Panc1 (cell line): ENCODE measurements at regions of chr15 and their contacts with region 1.

Region 1: DNA sequence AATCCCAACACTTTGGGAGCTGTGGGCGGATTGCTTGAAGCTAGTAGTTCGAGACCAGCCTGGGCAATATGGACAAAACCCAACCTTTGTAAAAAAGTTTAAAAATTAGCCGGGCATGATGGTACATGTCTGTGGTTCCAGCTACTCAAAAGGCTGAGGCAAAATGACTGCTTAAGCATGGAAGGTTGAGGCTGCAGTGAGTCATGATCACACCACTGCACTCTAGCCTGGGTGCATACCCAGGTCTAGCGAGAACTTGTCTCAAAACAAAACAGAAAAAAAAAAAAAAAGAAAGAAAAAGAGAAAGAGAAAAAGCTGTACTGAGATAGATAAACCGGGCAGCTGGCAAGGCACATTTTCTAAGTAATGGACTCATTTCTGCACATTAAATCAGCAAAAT is 10.6 kb downstream of the ARPP19 start:
- DNase-seq: no peak
- ATAC-seq: peak; percentile 71; the same call in 1 of the 2 replicates
- H3K4me3 ChIP-seq: no peak overlapping the region
- H3K27ac ChIP-seq: no peak overlapping the region
- H3K4me1 ChIP-seq: peaks cover 10% of the 10 kb centered on the region; the same call in 1 of the 2 replicates
- H3K27me3 ChIP-seq: no peaks in the 10 kb centered on the region
- CTCF ChIP-seq: no peak

Region 2: DNA sequence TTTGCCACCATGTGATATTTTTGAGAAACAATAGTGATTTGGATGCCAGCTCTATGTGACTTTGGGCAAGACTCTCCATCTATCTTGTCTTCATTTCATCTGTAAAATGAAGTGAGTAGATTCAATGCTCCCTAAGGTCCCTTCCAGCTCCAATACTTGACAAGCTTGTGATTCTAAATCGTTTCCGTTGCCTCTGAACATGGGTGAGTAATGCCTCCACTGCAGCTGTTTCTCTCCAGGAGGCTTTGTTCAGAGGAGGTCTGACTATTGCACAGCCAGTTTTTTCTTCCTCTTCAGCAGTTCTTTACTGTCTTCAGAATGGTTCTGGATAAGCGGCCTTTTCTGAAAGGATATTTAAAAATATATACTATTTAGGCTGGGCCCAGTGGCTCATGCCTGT is 743.6 kb before region 1 on chr15:
- CTCF ChIA-PET with region 1: no interaction called
- POLR2A ChIA-PET with region 1: no interaction called
- in situ Hi-C with region 1: no loop called
- intact Hi-C with region 1: no loop called
- DNase-seq: no peak
- ATAC-seq: no peak
- H3K4me3 ChIP-seq: no peak overlapping the region
- H3K27ac ChIP-seq: no peak overlapping the region
- H3K4me1 ChIP-seq: no peaks in the 10 kb centered on the region
- H3K27me3 ChIP-seq: no peaks in the 10 kb centered on the region
- CTCF ChIP-seq: no peak

Region 3: GRCh38 chr15:52308446-52309153 is 249.6 kb before region 1 on chr15:
- CTCF ChIA-PET with region 1: no interaction called
- POLR2A ChIA-PET with region 1: no interaction called
- in situ Hi-C with region 1: no loop called
- intact Hi-C with region 1: no loop called
- DNase-seq: no peak
- ATAC-seq: no peak
- H3K4me3 ChIP-seq: no peak overlapping the region
- H3K27ac ChIP-seq: no peak overlapping the region
- H3K4me1 ChIP-seq: no peaks in the 10 kb centered on the region
- H3K27me3 ChIP-seq: no peaks in the 10 kb centered on the region
- CTCF ChIP-seq: no peak

Region 4: DNA sequence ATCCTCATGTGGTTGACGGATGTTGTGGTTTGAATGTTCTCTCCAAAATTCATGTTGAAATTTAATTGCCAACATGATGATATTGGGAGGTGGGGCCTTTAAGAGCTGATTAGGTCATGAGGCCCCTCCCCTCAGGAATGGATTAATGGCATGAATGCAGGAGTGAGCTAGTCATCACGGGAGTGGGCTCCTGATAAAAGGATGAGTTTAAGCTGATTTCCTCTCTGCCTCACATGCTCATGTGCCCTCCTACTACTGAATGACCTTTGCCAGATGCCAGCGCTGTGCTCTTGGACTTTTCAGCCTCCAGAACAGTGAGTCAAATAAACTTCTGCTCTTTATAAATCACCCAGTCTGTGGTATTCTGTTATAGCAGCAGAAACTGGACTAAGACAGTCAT is 140.7 kb before region 1 on chr15:
- CTCF ChIA-PET with region 1: no interaction called
- POLR2A ChIA-PET with region 1: no interaction called
- in situ Hi-C with region 1: no loop called
- intact Hi-C with region 1: no loop called
- DNase-seq: no peak
- ATAC-seq: no peak
- H3K4me3 ChIP-seq: no peak overlapping the region
- H3K27ac ChIP-seq: no peak overlapping the region
- H3K4me1 ChIP-seq: no peaks in the 10 kb centered on the region
- H3K27me3 ChIP-seq: no peaks in the 10 kb centered on the region
- CTCF ChIP-seq: no peak

Region 5: GRCh38 chr15:52615284-52615683 is 57.1 kb after region 1 on chr15:
- CTCF ChIA-PET with region 1: no interaction called
- POLR2A ChIA-PET with region 1: no interaction called
- in situ Hi-C with region 1: no loop called
- intact Hi-C with region 1: loop called (anchors 10 kb)
- DNase-seq: no peak
- ATAC-seq: no peak
- H3K4me3 ChIP-seq: no peak overlapping the region
- H3K27ac ChIP-seq: no peak overlapping the region
- H3K4me1 ChIP-seq: no peaks in the 10 kb centered on the region
- H3K27me3 ChIP-seq: no peaks in the 10 kb centered on the region
- CTCF ChIP-seq: no peak

Region 6: GRCh38 chr15:52730173-52730572 is 172.0 kb after region 1 on chr15:
- CTCF ChIA-PET with region 1: no interaction called
- POLR2A ChIA-PET with region 1: no interaction called
- in situ Hi-C with region 1: no loop called
- intact Hi-C with region 1: loop called (anchors 5 kb)
- DNase-seq: no peak
- ATAC-seq: no peak
- H3K4me3 ChIP-seq: no peak overlapping the region
- H3K27ac ChIP-seq: no peak overlapping the region
- H3K4me1 ChIP-seq: no peaks in the 10 kb centered on the region
- H3K27me3 ChIP-seq: no peaks in the 10 kb centered on the region
- CTCF ChIP-seq: no peak